ENCODE measurements at regions of chr19 and their contacts with region 1.

Region 1: DNA sequence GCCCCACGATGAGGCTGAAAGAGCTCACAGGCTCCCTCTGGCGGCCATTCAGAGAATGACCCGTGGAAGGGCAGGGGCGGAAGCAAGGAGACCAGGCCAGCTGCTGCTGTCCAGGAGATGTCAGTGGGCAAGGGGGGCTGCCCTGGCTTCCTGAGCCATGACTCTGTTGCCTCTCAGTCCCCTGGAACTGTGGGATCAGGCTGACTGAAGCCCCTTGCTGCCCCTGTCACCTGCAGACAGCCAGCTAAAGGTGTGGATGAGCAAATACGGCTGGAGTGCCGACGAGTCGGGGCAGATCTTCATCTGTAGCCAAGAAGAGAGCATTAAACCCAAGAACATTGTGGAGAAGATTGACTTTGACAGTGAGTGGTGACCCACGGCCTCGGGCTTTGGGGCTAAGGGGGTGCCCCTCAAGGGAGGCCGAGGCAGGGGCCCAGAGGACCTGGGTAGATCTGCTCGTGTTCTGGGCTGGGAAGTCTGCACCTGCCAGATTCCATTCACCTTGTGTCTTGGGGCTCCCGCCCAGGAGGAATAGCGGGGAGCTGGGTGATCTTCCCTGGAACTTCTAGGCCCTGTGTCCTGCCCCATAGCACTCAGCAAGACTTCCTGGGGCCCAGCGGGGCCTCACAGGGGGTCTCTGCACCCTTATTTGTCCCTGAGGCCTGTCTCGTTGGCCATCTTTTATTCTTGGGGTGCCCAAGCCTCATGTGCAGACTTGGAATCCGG is 12.5 kb upstream of the ACTN4 start:
- DNase-seq: peak; percentile 74 to 82 (median 76)
- ATAC-seq: peak; percentile 62
- H3K4me3 ChIP-seq: no peak overlapping the region
- H3K27ac ChIP-seq: no peak overlapping the region
- H3K4me1 ChIP-seq: peaks cover 14 to 37% of the 10 kb centered on the region in 2 experiments; a peak in 4 of 5 replicates
- H3K27me3 ChIP-seq: no peaks in the 10 kb centered on the region
- CTCF ChIP-seq: peak; percentile 84 to 93 (median 90)
- EP300 ChIP-seq: no peak
- POLR2A ChIP-seq: peak; percentile 54; the same call in 1 of the 2 replicates
- RAD21 ChIP-seq: peak; percentile 77 to 82; a peak in 3 of 4 replicates

Region 2: DNA sequence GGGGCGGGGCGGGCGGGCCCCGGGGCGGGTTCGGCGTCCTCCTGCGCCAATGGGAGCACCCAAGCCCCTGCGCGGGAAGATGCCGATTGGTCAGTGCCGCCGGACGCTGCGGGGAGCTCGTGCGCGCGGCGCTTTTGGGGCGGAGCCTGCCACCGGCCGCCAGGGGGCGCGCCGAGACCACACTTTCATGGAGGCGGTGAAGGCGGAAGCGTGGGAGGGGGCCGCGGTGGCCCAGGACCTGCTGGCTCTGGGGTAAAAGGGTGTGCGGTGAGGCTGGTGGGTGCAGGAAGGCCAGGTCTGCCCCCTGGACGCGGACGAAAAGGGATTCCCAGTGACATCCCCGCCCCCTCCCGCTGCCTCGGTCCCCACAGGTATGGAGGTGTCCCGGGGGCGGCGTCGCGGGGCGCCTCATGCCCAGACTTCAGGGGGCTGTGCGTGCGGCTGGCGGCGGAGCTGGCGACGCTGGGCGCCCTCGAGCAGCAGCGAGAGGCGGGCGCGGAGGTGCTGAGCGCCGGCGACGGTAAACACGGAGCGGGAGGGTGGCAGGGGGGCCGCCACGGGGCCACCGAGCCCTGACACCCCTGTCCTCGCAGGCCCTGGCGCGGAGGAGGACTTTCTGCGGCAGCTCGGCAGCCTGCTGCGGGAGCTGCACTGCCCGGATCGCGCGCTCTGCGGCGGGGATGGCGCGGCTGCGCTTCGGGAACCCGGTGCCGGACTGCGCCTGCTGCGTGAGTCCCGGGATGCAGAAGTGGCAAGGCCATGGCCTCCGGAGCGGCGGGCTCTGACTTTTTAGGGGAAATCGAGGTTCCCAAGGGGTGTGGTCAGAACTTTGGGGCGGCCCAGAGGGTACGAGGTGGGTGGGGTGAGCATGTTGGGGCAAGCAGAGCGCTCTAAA is 231.7 kb before region 1 on chr19 and contains the start of gene FAM98C:
- CTCF ChIA-PET with region 1: interaction called, 7 read pairs
- POLR2A ChIA-PET with region 1: interaction called, 3 read pairs
- in situ Hi-C with region 1: loop called (anchors 5 kb)
- intact Hi-C with region 1: no loop called
- DNase-seq: peak; percentile 99 to 100 (median 100)
- ATAC-seq: peak; percentile 99
- H3K4me3 ChIP-seq: peak within 1 kb of the TSS; percentile 83
- H3K27ac ChIP-seq: peak within 1 kb of the TSS; percentile 89
- H3K4me1 ChIP-seq: peaks cover 6 to 33% of the 10 kb centered on the region in 2 experiments; a peak in 4 of 5 replicates
- H3K27me3 ChIP-seq: no peaks in the 10 kb centered on the region
- CTCF ChIP-seq: peak; percentile 91 to 95 (median 91)
- EP300 ChIP-seq: no peak
- POLR2A ChIP-seq: peak; percentile 69
- RAD21 ChIP-seq: peak; percentile 94 to 96
- polyA plus RNA-seq, gene FAM98C: 1.7 to 4.3 TPM

Region 3: GRCh38 chr19:38544034-38544958 is 90.6 kb before region 1 on chr19:
- CTCF ChIA-PET with region 1: interaction called, 12 read pairs
- POLR2A ChIA-PET with region 1: interaction called, 4 read pairs
- in situ Hi-C with region 1: no loop called
- intact Hi-C with region 1: loop called (anchors 1 kb)
- DNase-seq: peak; percentile 98 to 100 (median 98)
- ATAC-seq: peak; percentile 96
- H3K4me3 ChIP-seq: peak overlapping the region; percentile 56
- H3K27ac ChIP-seq: peak overlapping the region; percentile 92
- H3K4me1 ChIP-seq: peaks cover 16 to 23% of the 10 kb centered on the region in 2 experiments
- H3K27me3 ChIP-seq: no peaks in the 10 kb centered on the region
- CTCF ChIP-seq: peak; percentile 64 to 84 (median 82)
- EP300 ChIP-seq: peak; percentile 90
- POLR2A ChIP-seq: no peak
- RAD21 ChIP-seq: peak; percentile 85 to 88

Region 4: DNA sequence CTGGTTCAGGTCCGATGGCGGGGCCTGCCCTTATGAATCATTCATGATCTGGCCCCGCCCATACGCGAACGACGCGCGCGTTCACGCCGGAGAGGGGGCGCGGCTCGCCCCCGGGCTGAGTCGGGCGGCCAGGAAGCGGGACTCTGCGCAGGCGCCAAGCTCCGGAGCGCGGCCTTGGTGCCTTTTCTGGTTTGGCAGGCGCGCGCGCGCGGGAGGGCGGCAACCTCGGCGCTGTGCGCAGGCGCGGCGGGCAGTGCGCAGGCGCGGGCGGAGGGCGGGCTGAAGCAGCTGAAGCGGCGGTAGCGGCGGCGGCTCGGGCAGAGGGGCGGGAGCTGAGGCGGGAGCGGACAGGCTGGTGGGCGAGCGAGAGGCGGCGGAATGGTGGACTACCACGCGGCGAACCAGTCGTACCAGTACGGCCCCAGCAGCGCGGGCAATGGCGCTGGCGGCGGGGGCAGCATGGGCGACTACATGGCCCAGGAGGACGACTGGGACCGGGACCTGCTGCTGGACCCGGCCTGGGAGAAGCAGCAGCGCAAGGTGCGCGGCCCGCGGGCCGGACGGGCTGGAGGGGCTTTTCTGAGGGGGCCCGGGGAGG is 12.5 kb after region 1 on chr19 and contains the start of gene ACTN4:
- CTCF ChIA-PET with region 1: no interaction called
- POLR2A ChIA-PET with region 1: interaction called, 4 read pairs
- in situ Hi-C with region 1: no loop called
- intact Hi-C with region 1: loop called (anchors 1 kb)
- DNase-seq: peak; percentile 97 to 99 (median 98)
- ATAC-seq: peak; percentile 88
- H3K4me3 ChIP-seq: peak within 1 kb of the TSS; percentile 99
- H3K27ac ChIP-seq: peak within 1 kb of the TSS; percentile 83
- H3K4me1 ChIP-seq: peaks cover 27 to 34% of the 10 kb centered on the region in 2 experiments; a peak in 4 of 5 replicates
- H3K27me3 ChIP-seq: no peaks in the 10 kb centered on the region
- CTCF ChIP-seq: no peak
- EP300 ChIP-seq: no peak
- POLR2A ChIP-seq: peak; percentile 93
- RAD21 ChIP-seq: peak in 1 of 2 experiments; percentile 18; a peak in 2 of 4 replicates
- polyA plus RNA-seq, gene ACTN4: 3.1 to 8.4 TPM

Region 5: GRCh38 chr19:38729653-38730469 is 94.9 kb after region 1 on chr19:
- CTCF ChIA-PET with region 1: no interaction called
- POLR2A ChIA-PET with region 1: no interaction called
- in situ Hi-C with region 1: no loop called
- intact Hi-C with region 1: loop called (anchors 2 kb)
- DNase-seq: peak; percentile 66 to 87 (median 72)
- ATAC-seq: peak; percentile 91
- H3K4me3 ChIP-seq: no peak overlapping the region
- H3K27ac ChIP-seq: peak overlapping the region; percentile 49; the same call in 1 of the 3 replicates
- H3K4me1 ChIP-seq: peaks cover 19 to 61% of the 10 kb centered on the region in 2 experiments
- H3K27me3 ChIP-seq: no peaks in the 10 kb centered on the region
- CTCF ChIP-seq: peak; percentile 84 to 96 (median 88)
- EP300 ChIP-seq: no peak
- POLR2A ChIP-seq: no peak
- RAD21 ChIP-seq: peak; percentile 61 to 75